HEK293 (cell line): ENCODE measurements at regions of chr9 and their contacts with region 1.

Region 1: GRCh38 chr9:108535526-108535925 is 320.3 kb downstream of the ACTL7B start:
- H3K4me3 ChIP-seq: no peak overlapping the region
- H3K27ac ChIP-seq: no peak overlapping the region
- H3K4me1 ChIP-seq: no peaks in the 10 kb centered on the region
- CTCF ChIP-seq: no peak

Region 2: DNA sequence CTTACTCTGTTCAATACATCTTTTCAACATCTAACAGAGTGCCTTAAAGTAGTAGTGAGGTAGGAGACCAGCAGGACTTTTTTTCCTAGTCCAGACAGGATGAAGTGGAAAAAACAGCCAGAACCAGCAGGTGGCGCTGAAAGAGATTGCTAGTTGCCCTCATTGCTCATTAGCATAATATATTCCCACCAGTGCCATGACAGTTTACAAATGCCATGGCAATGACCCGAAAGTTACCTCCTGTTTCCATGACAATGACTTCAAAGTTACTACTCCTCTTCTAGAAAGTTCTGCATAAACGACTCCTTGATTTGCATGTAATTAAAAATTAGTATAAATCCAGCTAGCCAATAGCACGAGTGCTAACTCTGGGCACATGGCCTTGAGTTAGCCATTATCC is 67.1 kb before region 1 on chr9:
- CTCF ChIA-PET with region 1: interaction called, 13 read pairs
- POLR2A ChIA-PET with region 1: no interaction called
- H3K4me3 ChIP-seq: no peak overlapping the region
- H3K27ac ChIP-seq: no peak overlapping the region
- H3K4me1 ChIP-seq: no peaks in the 10 kb centered on the region
- CTCF ChIP-seq: no peak

Region 3: DNA sequence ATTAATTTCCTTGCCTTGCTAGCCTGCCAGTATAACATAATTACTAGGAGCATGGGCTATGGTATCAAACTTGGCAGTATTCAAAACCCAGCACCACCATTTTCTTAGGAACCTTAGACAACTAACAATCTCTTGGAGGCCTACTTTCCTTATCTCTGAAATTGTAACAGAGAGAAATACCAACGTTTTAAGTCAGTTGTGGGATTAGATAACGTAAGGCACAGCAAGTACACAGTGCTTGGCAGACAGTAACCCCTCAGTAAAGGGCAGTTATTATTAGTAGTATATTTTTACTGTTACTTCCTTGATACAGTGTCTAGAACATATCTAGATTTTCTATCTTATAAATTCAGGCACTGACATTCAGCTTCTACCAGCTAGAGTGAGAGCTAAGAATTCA is 10.7 kb after region 1 on chr9:
- CTCF ChIA-PET with region 1: interaction called, 11 read pairs
- POLR2A ChIA-PET with region 1: no interaction called
- H3K4me3 ChIP-seq: no peak overlapping the region
- H3K27ac ChIP-seq: no peak overlapping the region
- H3K4me1 ChIP-seq: no peaks in the 10 kb centered on the region
- CTCF ChIP-seq: no peak

Region 4: GRCh38 chr9:108671176-108671575 is 135.7 kb after region 1 on chr9:
- CTCF ChIA-PET with region 1: no interaction called
- POLR2A ChIA-PET with region 1: no interaction called
- H3K4me3 ChIP-seq: no peak overlapping the region
- H3K27ac ChIP-seq: no peak overlapping the region
- H3K4me1 ChIP-seq: no peaks in the 10 kb centered on the region
- CTCF ChIP-seq: 0 out of 2 replicates have a peak, but pooled peaks have one; percentile 9